CD4-positive, alpha-beta T cell (primary cell): ENCODE measurements at regions of chr11 and their contacts with region 1.

Region 1: DNA sequence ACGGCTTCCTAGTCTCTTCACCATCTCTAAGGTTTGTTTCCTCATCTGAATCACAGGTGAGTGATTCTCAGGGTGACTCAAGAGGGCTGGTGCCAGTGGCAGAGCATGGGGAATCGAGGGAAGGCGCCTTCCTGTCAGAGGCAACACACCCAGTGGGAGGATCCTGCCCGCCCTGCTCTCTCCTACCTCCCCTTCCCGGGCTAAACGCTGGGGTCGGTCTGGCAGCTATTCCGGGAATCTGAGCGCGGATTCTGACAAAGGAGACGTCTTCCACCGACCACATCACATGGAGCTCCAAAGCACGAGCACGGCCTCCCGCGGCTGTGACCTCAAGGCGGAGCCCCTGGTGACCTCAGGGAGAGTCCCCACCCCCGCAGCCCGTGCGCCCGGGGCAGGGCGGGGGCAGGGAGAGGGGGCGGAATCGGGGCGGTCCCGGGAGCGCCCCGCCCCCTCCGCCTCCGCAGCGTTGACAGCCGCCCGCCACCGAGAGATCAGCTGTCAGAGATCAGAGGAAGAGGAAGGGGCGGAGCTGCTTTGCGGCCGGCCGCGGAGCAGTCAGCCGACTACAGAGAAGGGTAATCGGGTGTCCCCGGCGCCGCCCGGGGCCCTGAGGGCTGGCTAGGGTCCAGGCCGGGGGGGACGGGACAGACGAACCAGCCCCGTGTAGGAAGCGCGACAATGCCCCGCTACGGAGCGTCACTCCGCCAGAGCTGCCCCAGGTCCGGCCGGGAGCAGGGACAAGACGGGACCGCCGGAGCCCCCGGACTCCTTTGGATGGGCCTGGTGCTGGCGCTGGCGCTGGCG is at the start of gene SMPD1:
- DNase-seq: peak; percentile 85 to 98 (median 94)
- ATAC-seq: peak; percentile 82
- H3K4me3 ChIP-seq: peak within 1 kb of the TSS; percentile 95
- H3K4me3 Mint-ChIP-seq: peak within 1 kb of the TSS; percentile 90
- H3K27ac ChIP-seq: peak within 1 kb of the TSS; percentile 87 to 93
- H3K27ac Mint-ChIP-seq: peak within 1 kb of the TSS; percentile 93
- H3K4me1 ChIP-seq: peaks cover 54% of the 10 kb centered on the region
- H3K4me1 Mint-ChIP-seq: peaks cover 75% of the 10 kb centered on the region
- H3K27me3 ChIP-seq: no peaks in the 10 kb centered on the region
- H3K27me3 Mint-ChIP-seq: no peaks in the 10 kb centered on the region
- CTCF ChIP-seq: no peak
- total RNA-seq, gene SMPD1: 70.9 to 75.0 TPM

Region 2: DNA sequence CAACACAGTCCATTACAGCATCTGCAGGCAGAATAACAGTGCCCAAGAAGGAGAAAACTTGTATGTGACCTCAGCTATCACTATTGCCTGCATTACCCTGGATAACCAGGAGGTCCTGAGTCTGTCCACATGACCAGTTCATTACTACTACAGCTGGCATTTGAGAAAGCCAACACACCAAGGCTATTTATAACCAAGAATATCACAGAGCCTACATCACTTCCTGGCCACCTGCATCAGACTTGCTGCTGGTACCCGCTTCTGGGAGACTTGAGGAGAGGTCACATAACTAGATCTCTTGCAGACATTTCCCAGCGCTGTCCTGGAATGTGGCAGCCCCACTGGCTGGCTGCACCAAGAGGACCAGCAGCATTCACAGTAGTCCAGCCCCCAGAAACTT is 293.7 kb before region 1 on chr11:
- CTCF ChIA-PET with region 1: no interaction called
- POLR2A ChIA-PET with region 1: no interaction called
- intact Hi-C with region 1: no loop called
- DNase-seq: no peak
- ATAC-seq: no peak
- H3K4me3 ChIP-seq: no peak overlapping the region
- H3K4me3 Mint-ChIP-seq: no peak overlapping the region
- H3K27ac ChIP-seq: no peak overlapping the region
- H3K27ac Mint-ChIP-seq: no peak overlapping the region
- H3K4me1 ChIP-seq: no peaks in the 10 kb centered on the region
- H3K4me1 Mint-ChIP-seq: peaks cover 7% of the 10 kb centered on the region
- H3K27me3 ChIP-seq: no peaks in the 10 kb centered on the region
- H3K27me3 Mint-ChIP-seq: peaks cover 26% of the 10 kb centered on the region
- CTCF ChIP-seq: no peak

Region 3: DNA sequence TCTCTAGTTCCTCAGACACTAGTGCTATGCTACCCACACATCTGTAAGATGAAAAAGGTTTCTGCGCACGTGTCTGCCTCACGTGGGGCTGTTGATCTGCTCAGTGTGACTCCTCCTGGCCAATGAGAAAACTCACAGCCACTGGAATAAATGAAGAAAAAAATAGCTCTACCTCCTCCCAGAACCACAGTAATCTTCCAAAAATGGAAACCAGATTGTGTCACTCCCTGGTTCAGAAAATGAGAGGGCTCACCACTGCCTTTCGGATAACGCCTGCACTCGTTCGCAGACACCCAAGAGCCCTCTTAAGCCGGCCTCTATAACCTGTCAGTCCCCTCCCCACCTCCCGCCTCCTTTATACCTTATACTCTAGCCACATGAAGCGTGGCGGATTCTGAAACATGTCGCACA is 23.7 kb after region 1 on chr11:
- CTCF ChIA-PET with region 1: interaction called, 4 read pairs
- POLR2A ChIA-PET with region 1: interaction called, 85 read pairs
- intact Hi-C with region 1: loop called in 1 of 2 experiments (anchors 2 kb)
- DNase-seq: peak in 13 of 14 experiments; percentile 48 to 90 (median 72)
- ATAC-seq: peak; percentile 91
- H3K4me3 ChIP-seq: peak overlapping the region; percentile 20
- H3K4me3 Mint-ChIP-seq: no peak overlapping the region
- H3K27ac ChIP-seq: peak overlapping the region; percentile 66 to 82
- H3K27ac Mint-ChIP-seq: no peak overlapping the region
- H3K4me1 ChIP-seq: peaks cover 88% of the 10 kb centered on the region
- H3K4me1 Mint-ChIP-seq: peaks cover 19% of the 10 kb centered on the region
- H3K27me3 ChIP-seq: no peaks in the 10 kb centered on the region
- H3K27me3 Mint-ChIP-seq: no peaks in the 10 kb centered on the region
- CTCF ChIP-seq: no peak

Region 4: GRCh38 chr11:6443269-6444003 is 53.3 kb after region 1 on chr11:
- CTCF ChIA-PET with region 1: interaction called, 10 read pairs
- POLR2A ChIA-PET with region 1: interaction called, 21 read pairs
- intact Hi-C with region 1: no loop called
- DNase-seq: peak; percentile 37 to 82 (median 48)
- ATAC-seq: peak; percentile 91
- H3K4me3 ChIP-seq: no peak overlapping the region
- H3K4me3 Mint-ChIP-seq: no peak overlapping the region
- H3K27ac ChIP-seq: no peak overlapping the region
- H3K27ac Mint-ChIP-seq: no peak overlapping the region
- H3K4me1 ChIP-seq: peaks cover 21% of the 10 kb centered on the region
- H3K4me1 Mint-ChIP-seq: no peaks in the 10 kb centered on the region
- H3K27me3 ChIP-seq: no peaks in the 10 kb centered on the region
- H3K27me3 Mint-ChIP-seq: no peaks in the 10 kb centered on the region
- CTCF ChIP-seq: peak; percentile 89

Region 5: DNA sequence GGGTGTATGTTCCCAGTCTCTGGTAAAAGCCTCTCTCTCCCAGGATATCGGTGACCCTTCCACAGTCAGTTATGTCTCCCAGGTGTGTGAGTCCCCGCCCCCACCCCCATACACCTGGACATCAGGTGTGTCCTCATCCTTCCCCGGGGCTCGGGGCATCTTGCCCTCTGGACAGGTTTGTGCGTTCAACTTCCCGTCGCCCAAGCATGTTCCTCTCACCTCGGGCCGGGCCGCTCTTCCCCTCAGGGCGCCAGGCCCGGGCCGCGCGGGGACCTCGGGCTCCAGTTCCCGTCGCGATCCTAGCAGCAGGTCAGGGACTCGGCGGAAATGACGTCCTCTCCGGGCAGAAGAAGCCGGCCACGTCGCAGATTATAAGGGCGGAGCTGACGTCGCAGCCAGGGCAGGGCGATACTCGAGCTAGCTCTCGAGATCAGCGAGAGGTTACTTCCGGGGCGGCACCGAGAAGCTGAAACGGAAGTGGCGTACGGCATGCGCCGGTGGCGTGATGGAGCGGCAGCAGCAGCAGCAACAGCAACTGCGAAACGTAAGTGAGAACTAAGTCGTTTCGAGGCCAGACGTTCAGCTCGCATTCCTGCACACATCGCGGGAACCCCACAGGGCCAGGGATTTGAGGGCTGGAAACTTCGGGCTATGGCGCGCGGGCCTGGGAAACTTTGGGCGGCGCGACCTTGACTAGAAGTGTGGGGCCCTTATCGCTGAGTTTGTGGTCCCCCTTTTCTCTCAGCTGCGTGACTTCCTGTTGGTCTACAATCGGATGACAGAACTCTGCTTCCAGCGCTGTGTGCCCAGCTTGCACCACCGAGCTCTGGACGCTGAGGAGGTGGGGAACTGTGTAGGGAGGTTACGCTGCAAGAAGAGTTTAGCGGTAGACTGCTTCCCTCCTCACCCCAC is 91.1 kb after region 1 on chr11 and contains the starts of genes ARFIP2 and TIMM10B:
- CTCF ChIA-PET with region 1: no interaction called
- POLR2A ChIA-PET with region 1: interaction called, 27 read pairs
- intact Hi-C with region 1: loop called in 1 of 2 experiments (anchors 1 kb)
- DNase-seq: peak; percentile 92 to 99 (median 96)
- ATAC-seq: peak; percentile 94
- H3K4me3 ChIP-seq: peak within 1 kb of the TSS; percentile 83
- H3K4me3 Mint-ChIP-seq: peak within 1 kb of the TSS; percentile 98
- H3K27ac ChIP-seq: peak within 1 kb of the TSS; percentile 87 to 95
- H3K27ac Mint-ChIP-seq: peak within 1 kb of the TSS; percentile 99
- H3K4me1 ChIP-seq: peaks cover 39% of the 10 kb centered on the region
- H3K4me1 Mint-ChIP-seq: peaks cover 42% of the 10 kb centered on the region
- H3K27me3 ChIP-seq: no peaks in the 10 kb centered on the region
- H3K27me3 Mint-ChIP-seq: no peaks in the 10 kb centered on the region
- CTCF ChIP-seq: no peak
- total RNA-seq, gene ARFIP2: 78.1 to 80.5 TPM
- total RNA-seq, gene TIMM10B: 68.5 to 68.6 TPM